Activated CD4-positive, alpha-beta memory T cell treated with anti-CD3 and anti-CD28 coated beads, Interleukin-2, amount 10 ng/mL, durations not matched to agents 7 days and 5 days (primary cell): ENCODE measurements at regions of chr3 and their contacts with region 1.

Region 1: GRCh38 chr3:153043729-153044328 is 118.2 kb upstream of the RAP2B start:
- DNase-seq: no peak
- H3K4me3 Mint-ChIP-seq: no peak overlapping the region
- H3K27ac Mint-ChIP-seq: no peak overlapping the region
- H3K4me1 Mint-ChIP-seq: peaks cover 11% of the 10 kb centered on the region
- H3K27me3 Mint-ChIP-seq: peaks cover 2% of the 10 kb centered on the region

Region 2: DNA sequence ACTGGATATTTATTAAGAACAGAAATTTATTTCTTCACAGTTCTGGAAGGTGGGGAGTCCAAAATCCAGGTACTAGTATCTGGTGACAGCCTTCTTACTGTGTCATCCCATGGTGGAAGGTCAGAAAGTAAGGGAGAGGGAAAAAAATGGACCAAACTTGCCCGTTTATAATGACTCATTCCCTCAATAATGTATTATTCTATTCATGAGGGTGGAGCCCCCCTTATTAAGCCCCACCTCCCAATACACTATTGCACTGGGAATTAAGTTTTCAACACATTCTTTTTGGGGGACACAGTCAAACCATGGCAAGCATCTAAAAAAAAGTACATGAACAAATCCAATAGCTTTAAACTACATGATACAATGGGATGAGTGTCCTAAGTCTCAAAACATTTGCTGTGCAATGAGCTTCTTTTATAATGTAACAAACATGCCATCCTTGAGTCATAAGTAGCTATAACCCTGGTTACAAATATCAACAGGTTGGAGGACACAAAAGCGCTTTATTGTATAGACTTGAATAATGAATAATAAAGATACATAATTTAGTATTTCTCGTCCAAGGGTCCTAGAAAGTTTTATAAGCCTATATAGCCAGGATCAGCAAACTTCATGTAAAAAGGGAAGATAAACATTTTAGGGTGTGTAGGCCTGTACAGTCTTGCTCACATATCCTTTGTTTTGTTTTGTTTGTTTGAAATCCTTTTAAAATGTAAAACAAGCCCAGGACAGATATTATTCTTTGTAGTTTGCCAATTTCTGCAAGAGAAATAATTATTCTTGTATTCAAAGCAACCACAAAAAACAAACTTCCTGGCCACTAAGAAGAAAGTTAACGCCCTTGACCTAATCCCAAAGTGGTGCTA is 42.4 kb before region 1 on chr3:
- CTCF ChIA-PET with region 1: no interaction called
- POLR2A ChIA-PET with region 1: no interaction called
- DNase-seq: no peak
- H3K4me3 Mint-ChIP-seq: no peak overlapping the region
- H3K27ac Mint-ChIP-seq: no peak overlapping the region
- H3K4me1 Mint-ChIP-seq: no peaks in the 10 kb centered on the region
- H3K27me3 Mint-ChIP-seq: peaks cover 2% of the 10 kb centered on the region

Region 3: DNA sequence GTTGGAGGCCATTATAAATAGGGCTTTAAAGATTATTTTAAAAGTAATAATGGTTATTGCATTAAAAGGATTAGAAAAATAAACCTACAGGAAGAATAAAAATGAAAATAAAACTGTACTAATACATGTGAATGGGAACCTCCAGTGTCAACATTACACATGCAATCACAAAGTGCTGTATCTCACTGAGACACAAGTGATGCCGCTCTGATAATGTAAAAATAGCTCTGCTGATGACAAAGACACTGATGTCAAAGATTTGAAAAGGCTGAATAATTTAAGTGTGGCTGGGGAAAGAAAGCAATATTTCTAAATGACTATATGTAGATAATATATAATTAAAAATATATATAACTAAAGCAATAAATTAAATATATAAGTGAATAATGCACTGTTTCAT is 10.9 kb before region 1 on chr3:
- CTCF ChIA-PET with region 1: interaction called, 10 read pairs
- POLR2A ChIA-PET with region 1: no interaction called
- DNase-seq: no peak
- H3K4me3 Mint-ChIP-seq: no peak overlapping the region
- H3K27ac Mint-ChIP-seq: no peak overlapping the region
- H3K4me1 Mint-ChIP-seq: no peaks in the 10 kb centered on the region
- H3K27me3 Mint-ChIP-seq: no peaks in the 10 kb centered on the region

Region 4: GRCh38 chr3:153111016-153111415 is 67.2 kb after region 1 on chr3:
- CTCF ChIA-PET with region 1: no interaction called
- POLR2A ChIA-PET with region 1: no interaction called
- DNase-seq: no peak
- H3K4me3 Mint-ChIP-seq: no peak overlapping the region
- H3K27ac Mint-ChIP-seq: no peak overlapping the region
- H3K4me1 Mint-ChIP-seq: no peaks in the 10 kb centered on the region
- H3K27me3 Mint-ChIP-seq: no peaks in the 10 kb centered on the region

Region 5: DNA sequence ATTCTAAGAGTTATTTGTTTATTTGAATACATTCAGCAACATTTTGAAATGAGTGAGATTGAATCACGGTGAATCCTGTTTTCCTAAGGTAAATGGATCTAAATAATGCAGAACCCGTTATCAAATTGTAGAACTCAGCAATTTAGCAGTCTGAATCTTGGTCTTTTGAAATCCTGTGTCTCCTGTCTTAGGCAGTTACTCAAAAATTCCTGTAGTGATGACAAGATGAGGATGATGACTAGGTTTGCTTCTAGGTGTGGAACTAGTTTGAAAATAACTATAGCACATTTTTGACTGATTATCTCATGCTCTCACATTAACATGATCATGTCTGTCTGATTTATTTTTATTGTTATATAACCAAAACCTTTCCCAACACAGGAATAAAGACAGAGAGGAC is 233.2 kb after region 1 on chr3:
- CTCF ChIA-PET with region 1: no interaction called
- POLR2A ChIA-PET with region 1: no interaction called
- DNase-seq: no peak
- H3K4me3 Mint-ChIP-seq: no peak overlapping the region
- H3K27ac Mint-ChIP-seq: no peak overlapping the region
- H3K4me1 Mint-ChIP-seq: peaks cover 8% of the 10 kb centered on the region
- H3K27me3 Mint-ChIP-seq: peaks cover 2% of the 10 kb centered on the region

Region 6: DNA sequence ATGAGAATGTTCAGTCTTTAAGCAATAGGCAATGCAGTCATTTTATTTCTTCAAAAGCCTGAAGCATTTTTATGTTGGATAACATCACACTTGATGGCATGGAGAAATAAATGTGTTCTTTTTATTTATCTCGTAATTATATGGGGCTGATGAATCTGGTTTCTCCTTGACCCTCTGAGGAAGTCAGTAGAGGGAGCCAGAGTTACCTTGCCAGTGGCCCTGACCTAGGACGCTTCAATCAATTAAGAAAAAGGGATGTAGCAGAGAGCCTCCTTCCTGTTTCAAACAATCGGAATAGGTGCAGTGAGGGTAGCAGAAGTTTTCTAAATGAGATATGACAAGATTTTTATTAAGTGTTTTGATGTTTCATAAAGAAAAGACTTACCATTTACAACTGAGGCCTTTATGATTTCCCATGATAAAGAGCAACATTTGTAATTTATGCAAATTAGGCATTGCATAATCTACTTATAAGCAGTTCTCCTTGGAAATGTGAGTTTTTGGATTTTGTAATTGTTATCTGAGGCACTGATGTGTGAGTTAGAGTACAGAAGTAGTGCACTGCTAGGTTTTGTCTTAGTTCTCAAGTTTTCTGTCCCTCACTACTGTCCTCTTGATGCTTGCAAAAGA is 247.3 kb after region 1 on chr3:
- CTCF ChIA-PET with region 1: interaction called, 18 read pairs
- POLR2A ChIA-PET with region 1: interaction called, 3 read pairs
- DNase-seq: no peak
- H3K4me3 Mint-ChIP-seq: no peak overlapping the region
- H3K27ac Mint-ChIP-seq: no peak overlapping the region
- H3K4me1 Mint-ChIP-seq: peaks cover 42% of the 10 kb centered on the region
- H3K27me3 Mint-ChIP-seq: no peaks in the 10 kb centered on the region

Region 7: DNA sequence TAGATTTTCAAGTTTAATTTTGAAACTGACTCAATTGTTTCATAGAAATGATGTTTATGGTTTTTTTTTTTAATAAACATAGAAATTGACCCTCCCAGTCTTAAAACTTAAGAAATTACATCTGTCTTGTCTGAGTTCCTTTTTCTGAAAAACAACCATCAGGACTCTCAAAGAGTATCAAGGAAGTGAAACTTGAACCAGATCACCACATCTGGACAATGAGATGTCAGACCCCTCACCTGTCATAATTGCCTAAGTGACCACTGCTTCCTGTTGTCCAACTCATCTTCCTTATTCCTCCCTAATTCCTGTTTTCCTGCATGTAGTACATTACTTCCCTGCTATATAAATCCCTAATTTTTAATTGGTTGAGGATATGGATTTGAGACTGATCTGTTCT is 635.9 kb after region 1 on chr3:
- CTCF ChIA-PET with region 1: no interaction called
- POLR2A ChIA-PET with region 1: no interaction called
- DNase-seq: no peak
- H3K4me3 Mint-ChIP-seq: no peak overlapping the region
- H3K27ac Mint-ChIP-seq: no peak overlapping the region
- H3K4me1 Mint-ChIP-seq: peaks cover 5% of the 10 kb centered on the region
- H3K27me3 Mint-ChIP-seq: no peaks in the 10 kb centered on the region